ENCODE measurements at regions of chr7 and their contacts with region 1.

Region 1: DNA sequence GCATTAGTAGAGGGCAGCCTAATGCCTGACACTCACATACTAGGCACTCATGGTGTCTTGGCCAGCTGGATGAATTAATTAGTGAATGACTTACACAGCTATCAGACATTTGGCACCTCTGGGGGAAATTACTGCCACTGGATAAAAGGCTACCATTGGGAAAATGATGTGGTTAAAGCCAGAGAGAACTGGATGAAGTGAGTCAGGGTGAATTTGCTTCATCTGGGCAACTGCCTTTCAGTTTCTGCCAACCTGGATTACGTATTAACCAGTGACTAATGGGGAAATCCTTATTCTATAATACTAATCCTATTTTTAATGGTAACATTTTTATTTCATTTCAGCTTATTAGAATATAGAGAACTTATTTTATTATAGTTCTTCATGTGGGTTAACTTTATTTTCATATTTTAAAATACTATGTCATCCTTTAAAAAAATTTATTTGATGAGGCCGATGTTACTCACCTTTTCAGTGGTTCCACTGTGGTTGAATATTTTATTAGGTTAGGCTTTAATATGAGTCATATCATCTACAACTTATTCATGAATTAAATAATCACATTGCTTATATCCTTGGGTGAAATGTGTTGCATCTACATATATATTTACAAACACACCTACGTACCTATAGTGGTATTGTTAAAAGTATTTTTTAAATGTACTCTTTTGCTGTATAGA is 85.6 kb upstream of the CAPZA2 start:
- DNase-seq: peak; percentile 96
- H3K4me3 ChIP-seq: no peak overlapping the region
- H3K27ac ChIP-seq: peak overlapping the region; percentile 92
- H3K4me1 ChIP-seq: peaks cover 65% of the 10 kb centered on the region
- H3K27me3 ChIP-seq: no peaks in the 10 kb centered on the region
- CTCF ChIP-seq: no peak

Region 2: DNA sequence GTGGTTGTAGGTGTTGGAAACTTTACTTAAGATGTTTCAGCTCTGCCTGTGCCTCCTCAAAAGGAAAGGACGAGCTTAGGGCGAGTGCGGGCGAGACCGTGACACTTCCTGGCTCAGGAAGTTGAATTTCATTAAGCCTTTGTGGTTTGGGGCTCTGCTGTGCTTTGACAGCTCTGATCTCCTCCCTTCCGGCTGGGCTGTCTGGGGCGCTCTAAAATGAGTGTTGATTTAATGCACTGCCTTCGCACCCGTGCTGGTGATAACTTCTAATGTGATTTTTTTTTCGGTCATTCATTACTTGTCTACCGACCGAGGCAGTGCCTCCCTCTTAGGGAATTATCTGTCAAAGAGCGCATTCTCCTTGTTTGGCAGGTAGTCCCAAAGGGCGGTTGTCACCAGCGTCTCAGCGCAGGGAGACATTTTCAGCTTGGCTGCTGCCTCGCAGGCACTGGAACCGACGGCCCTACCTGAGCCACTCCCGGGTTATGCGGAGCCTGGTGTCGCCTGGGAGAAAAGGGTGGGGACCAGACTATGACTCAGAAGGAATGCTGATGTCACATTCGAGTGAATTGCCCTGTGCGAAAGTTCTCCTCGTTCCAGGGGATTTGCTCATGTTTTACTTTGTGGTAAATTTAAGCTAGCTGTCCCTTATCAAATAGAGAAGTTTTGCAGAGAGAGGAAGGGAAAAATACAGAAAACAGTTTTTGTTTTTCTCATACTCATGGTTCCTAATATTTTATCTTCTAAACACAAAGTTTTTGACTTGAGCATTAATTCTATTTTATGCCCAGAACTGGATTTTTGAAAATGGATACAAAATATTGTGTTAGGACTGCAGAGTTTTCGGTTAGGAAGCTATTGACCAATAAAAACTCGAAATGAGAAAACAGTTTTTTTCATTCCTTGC is 565.5 kb before region 1 on chr7:
- CTCF ChIA-PET with region 1: no interaction called
- dilution Hi-C with region 1: no loop called
- in situ Hi-C with region 1: no loop called
- intact Hi-C with region 1: loop called (anchors 2 kb)
- DNase-seq: peak; percentile 91
- H3K4me3 ChIP-seq: peak overlapping the region; percentile 85 to 98 (median 91)
- H3K27ac ChIP-seq: peak overlapping the region; percentile 99
- H3K4me1 ChIP-seq: peaks cover 36% of the 10 kb centered on the region
- H3K27me3 ChIP-seq: no peaks in the 10 kb centered on the region
- CTCF ChIP-seq: no peak

Region 3: DNA sequence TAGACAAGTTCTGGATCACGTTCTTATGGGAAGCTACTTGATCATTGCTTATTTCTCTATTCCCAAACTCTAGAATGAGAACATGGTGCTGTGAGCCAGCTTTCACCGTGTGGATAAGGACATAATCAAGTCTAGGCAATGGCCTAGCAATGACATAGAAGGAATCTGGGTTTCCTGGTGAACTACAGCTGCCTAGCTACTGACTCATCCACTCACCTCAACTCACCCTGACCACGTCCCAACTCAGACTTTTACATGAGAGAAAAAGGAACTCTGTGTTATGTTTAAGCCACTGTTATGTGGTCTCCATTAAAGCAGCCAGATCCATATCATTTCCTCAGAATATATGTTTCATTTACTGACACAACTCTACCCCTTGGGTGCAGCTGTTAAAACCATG is 123.5 kb before region 1 on chr7:
- CTCF ChIA-PET with region 1: no interaction called
- dilution Hi-C with region 1: no loop called
- in situ Hi-C with region 1: no loop called
- intact Hi-C with region 1: loop called (anchors 1 kb)
- DNase-seq: peak; percentile 93
- H3K4me3 ChIP-seq: peak overlapping the region in 1 of 3 experiments; percentile 17
- H3K27ac ChIP-seq: peak overlapping the region; percentile 99
- H3K4me1 ChIP-seq: peaks cover 31% of the 10 kb centered on the region
- H3K27me3 ChIP-seq: no peaks in the 10 kb centered on the region
- CTCF ChIP-seq: no peak

Region 4: DNA sequence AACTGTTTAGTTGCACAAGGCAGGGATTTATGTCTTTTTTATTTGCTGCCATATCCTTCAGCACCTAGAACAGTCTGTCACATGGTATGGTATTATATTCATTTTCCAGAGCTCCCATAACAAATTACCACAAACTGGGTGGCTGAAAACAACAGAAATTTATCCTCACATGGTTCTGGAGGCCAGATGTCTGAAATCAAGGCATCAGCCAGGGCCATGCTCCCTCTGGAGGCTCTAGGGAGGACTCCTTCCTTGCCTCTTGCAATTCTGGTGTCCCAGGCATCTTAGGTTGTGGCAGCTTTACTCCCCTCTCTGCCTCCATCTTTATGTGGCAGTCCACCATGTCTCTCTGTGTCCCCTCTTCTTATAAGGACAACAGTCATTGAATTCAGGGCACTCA is 61.7 kb before region 1 on chr7:
- CTCF ChIA-PET with region 1: interaction called, 5 read pairs
- dilution Hi-C with region 1: loop called (anchors 5 kb)
- in situ Hi-C with region 1: no loop called
- intact Hi-C with region 1: no loop called
- DNase-seq: no peak
- H3K4me3 ChIP-seq: no peak overlapping the region
- H3K27ac ChIP-seq: no peak overlapping the region
- H3K4me1 ChIP-seq: peaks cover 27% of the 10 kb centered on the region
- H3K27me3 ChIP-seq: no peaks in the 10 kb centered on the region
- CTCF ChIP-seq: peak in 1 of 2 donors; percentile 21